ENCODE measurements at regions of chr2 and their contacts with region 1.

Region 1: GRCh38 chr2:37738362-37738801 is 66.9 kb upstream of the CDC42EP3 start:
- DNase-seq: peak; percentile 84 to 90
- H3K4me3 ChIP-seq: no peak overlapping the region
- H3K4me3 Mint-ChIP-seq: peak overlapping the region; percentile 52
- H3K27ac Mint-ChIP-seq: peak overlapping the region; percentile 95
- H3K4me1 ChIP-seq: peaks cover 25% of the 10 kb centered on the region
- H3K4me1 Mint-ChIP-seq: peaks cover 50% of the 10 kb centered on the region
- H3K27me3 ChIP-seq: no peaks in the 10 kb centered on the region
- H3K27me3 Mint-ChIP-seq: no peaks in the 10 kb centered on the region
- CTCF ChIP-seq: no peak

Region 2: DNA sequence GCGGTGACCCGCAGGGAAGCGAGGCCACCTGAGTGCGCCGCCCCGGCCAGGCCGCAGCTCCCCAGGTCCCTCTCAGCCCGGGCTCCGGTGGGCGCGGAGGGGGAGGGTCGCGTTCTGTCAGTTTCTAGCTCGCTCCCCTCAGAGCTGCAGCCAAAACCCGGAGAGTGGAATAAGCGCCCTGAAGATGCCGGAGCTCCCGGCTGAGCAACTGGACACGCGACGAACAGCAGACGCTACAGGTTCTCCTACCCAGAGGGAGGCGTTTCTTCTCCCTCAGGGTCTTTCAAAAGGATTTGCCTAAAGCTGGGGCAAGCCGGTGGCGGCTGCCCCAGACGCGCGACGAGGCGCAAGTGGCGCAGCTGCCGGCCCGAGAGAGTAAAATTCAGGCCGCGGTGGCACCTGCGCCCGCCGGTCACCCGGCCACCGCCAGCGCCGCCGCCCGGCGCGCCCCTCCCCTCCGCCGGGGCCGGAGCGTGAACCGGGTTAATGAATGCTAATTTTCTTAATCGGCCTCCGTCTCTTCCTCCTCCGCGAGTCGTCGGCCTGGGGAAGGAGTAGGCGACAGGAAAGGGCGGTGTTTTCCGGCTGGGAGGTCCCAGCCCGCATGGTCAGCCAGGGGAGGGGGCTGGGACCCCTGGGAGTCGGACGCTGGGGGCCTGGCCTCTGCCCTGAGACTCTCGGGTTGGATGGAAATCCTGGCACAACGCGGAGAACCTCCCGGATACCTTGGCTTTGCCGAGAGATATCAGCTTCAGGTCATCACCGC is 66.1 kb before region 1 on chr2:
- CTCF ChIA-PET with region 1: interaction called, 6 read pairs
- POLR2A ChIA-PET with region 1: no interaction called
- intact Hi-C with region 1: loop called (anchors 1 kb)
- DNase-seq: peak; percentile 94 to 95
- H3K4me3 ChIP-seq: peak overlapping the region; percentile 98
- H3K4me3 Mint-ChIP-seq: peak overlapping the region; percentile 73
- H3K27ac Mint-ChIP-seq: peak overlapping the region; percentile 20
- H3K4me1 ChIP-seq: peaks cover 47% of the 10 kb centered on the region
- H3K4me1 Mint-ChIP-seq: peaks cover 40% of the 10 kb centered on the region
- H3K27me3 ChIP-seq: no peaks in the 10 kb centered on the region
- H3K27me3 Mint-ChIP-seq: no peaks in the 10 kb centered on the region
- CTCF ChIP-seq: no peak

Region 3: GRCh38 chr2:37688771-37689468 is 49.5 kb before region 1 on chr2:
- CTCF ChIA-PET with region 1: no interaction called
- POLR2A ChIA-PET with region 1: interaction called, 3 read pairs
- intact Hi-C with region 1: loop called (anchors 1 kb)
- DNase-seq: peak; percentile 74 to 82
- H3K4me3 ChIP-seq: no peak overlapping the region
- H3K4me3 Mint-ChIP-seq: peak overlapping the region; percentile 36
- H3K27ac Mint-ChIP-seq: peak overlapping the region; percentile 70
- H3K4me1 ChIP-seq: peaks cover 26% of the 10 kb centered on the region
- H3K4me1 Mint-ChIP-seq: peaks cover 31% of the 10 kb centered on the region
- H3K27me3 ChIP-seq: no peaks in the 10 kb centered on the region
- H3K27me3 Mint-ChIP-seq: no peaks in the 10 kb centered on the region
- CTCF ChIP-seq: no peak

Region 4: GRCh38 chr2:37767956-37768925 is 29.9 kb after region 1 on chr2:
- CTCF ChIA-PET with region 1: no interaction called
- POLR2A ChIA-PET with region 1: no interaction called
- intact Hi-C with region 1: loop called (anchors 1 kb)
- DNase-seq: peak; percentile 60 to 70
- H3K4me3 ChIP-seq: no peak overlapping the region
- H3K4me3 Mint-ChIP-seq: peak overlapping the region; percentile 15
- H3K27ac Mint-ChIP-seq: peak overlapping the region; percentile 43
- H3K4me1 ChIP-seq: peaks cover 40% of the 10 kb centered on the region
- H3K4me1 Mint-ChIP-seq: peaks cover 41% of the 10 kb centered on the region
- H3K27me3 ChIP-seq: no peaks in the 10 kb centered on the region
- H3K27me3 Mint-ChIP-seq: no peaks in the 10 kb centered on the region
- CTCF ChIP-seq: no peak